ENCODE measurements at regions of chr2 and their contacts with region 1.

Region 1: GRCh38 chr2:8525582-8526402 is 156.1 kb upstream of the ID2 start:
- DNase-seq: no peak
- ATAC-seq: peak; percentile 46
- H3K4me3 Mint-ChIP-seq: peak overlapping the region; percentile 54
- H3K27ac Mint-ChIP-seq: peak overlapping the region; percentile 36
- H3K4me1 Mint-ChIP-seq: peaks cover 43% of the 10 kb centered on the region
- H3K27me3 Mint-ChIP-seq: peaks cover 30% of the 10 kb centered on the region
- CTCF ChIP-seq: no peak

Region 2: GRCh38 chr2:8285081-8285480 is 240.7 kb before region 1 on chr2:
- CTCF ChIA-PET with region 1: no interaction called
- POLR2A ChIA-PET with region 1: no interaction called
- intact Hi-C with region 1: no loop called
- DNase-seq: no peak
- ATAC-seq: no peak
- H3K4me3 Mint-ChIP-seq: no peak overlapping the region
- H3K27ac Mint-ChIP-seq: no peak overlapping the region
- H3K4me1 Mint-ChIP-seq: no peaks in the 10 kb centered on the region
- H3K27me3 Mint-ChIP-seq: peaks cover 44% of the 10 kb centered on the region
- CTCF ChIP-seq: no peak

Region 3: GRCh38 chr2:8412586-8412985 is 113.2 kb before region 1 on chr2:
- CTCF ChIA-PET with region 1: no interaction called
- POLR2A ChIA-PET with region 1: no interaction called
- intact Hi-C with region 1: no loop called
- DNase-seq: no peak
- ATAC-seq: no peak
- H3K4me3 Mint-ChIP-seq: no peak overlapping the region
- H3K27ac Mint-ChIP-seq: no peak overlapping the region
- H3K4me1 Mint-ChIP-seq: peaks cover 11% of the 10 kb centered on the region
- H3K27me3 Mint-ChIP-seq: peaks cover 15% of the 10 kb centered on the region
- CTCF ChIP-seq: no peak

Region 4: GRCh38 chr2:8456151-8456845 is 69.5 kb before region 1 on chr2:
- CTCF ChIA-PET with region 1: no interaction called
- POLR2A ChIA-PET with region 1: no interaction called
- intact Hi-C with region 1: loop called (anchors 5 kb)
- DNase-seq: no peak
- ATAC-seq: no peak
- H3K4me3 Mint-ChIP-seq: no peak overlapping the region
- H3K27ac Mint-ChIP-seq: no peak overlapping the region
- H3K4me1 Mint-ChIP-seq: peaks cover 10% of the 10 kb centered on the region
- H3K27me3 Mint-ChIP-seq: peaks cover 83% of the 10 kb centered on the region
- CTCF ChIP-seq: no peak

Region 5: GRCh38 chr2:8514796-8515758 is 10.7 kb before region 1 on chr2:
- CTCF ChIA-PET with region 1: no interaction called
- POLR2A ChIA-PET with region 1: interaction called, 3 read pairs
- intact Hi-C with region 1: loop called (anchors 1 kb)
- DNase-seq: no peak
- ATAC-seq: peak; percentile 84
- H3K4me3 Mint-ChIP-seq: peak overlapping the region; percentile 36
- H3K27ac Mint-ChIP-seq: peak overlapping the region; percentile 27
- H3K4me1 Mint-ChIP-seq: peaks cover 27% of the 10 kb centered on the region
- H3K27me3 Mint-ChIP-seq: peaks cover 22% of the 10 kb centered on the region
- CTCF ChIP-seq: no peak